K562 (cell line): ENCODE measurements at regions of chr4 and their contacts with region 1.

Region 1: GRCh38 chr4:154807042-154807630 is 26.1 kb downstream of the RBM46 start:
- DNase-seq: peak; percentile 8 to 20 (median 16)
- ATAC-seq: peak; percentile 70; the same call in 2 of the 3 replicates
- H3K4me3 ChIP-seq: no peak overlapping the region
- H3K27ac ChIP-seq: no peak overlapping the region
- H3K4me1 ChIP-seq: no peaks in the 10 kb centered on the region
- H3K27me3 ChIP-seq: no peaks in the 10 kb centered on the region
- CTCF ChIP-seq: peak; percentile 50 to 99 (median 98); a peak in 5 of 6 replicates
- EP300 ChIP-seq: no peak
- POLR2A ChIP-seq: no peak
- RAD21 ChIP-seq: peak; percentile 75 to 88

Region 2: DNA sequence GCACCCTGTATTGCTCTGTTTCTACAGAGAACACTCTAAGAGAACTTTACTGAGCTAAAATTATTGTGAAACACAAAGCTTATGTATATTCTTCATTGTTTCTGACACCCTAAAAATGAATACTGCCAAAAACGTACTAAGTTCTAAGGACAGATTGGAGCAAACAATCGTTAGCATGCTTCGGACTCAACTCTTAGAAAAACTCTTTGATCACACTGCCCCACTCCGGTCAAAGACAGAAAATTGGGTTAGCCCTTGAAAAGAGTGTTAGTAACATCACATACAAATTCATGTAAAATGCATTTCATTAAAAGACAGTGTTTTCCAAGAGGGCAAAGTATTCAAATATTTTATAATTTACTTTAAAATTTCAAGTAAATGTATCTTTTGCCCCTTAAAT is 492.9 kb before region 1 on chr4:
- CTCF ChIA-PET with region 1: no interaction called
- POLR2A ChIA-PET with region 1: no interaction called
- in situ Hi-C with region 1: no loop called
- intact Hi-C with region 1: no loop called
- DNase-seq: peak in 1 of 4 experiments; percentile 5
- ATAC-seq: no peak
- H3K4me3 ChIP-seq: no peak overlapping the region
- H3K27ac ChIP-seq: no peak overlapping the region
- H3K4me1 ChIP-seq: no peaks in the 10 kb centered on the region
- H3K27me3 ChIP-seq: no peaks in the 10 kb centered on the region
- CTCF ChIP-seq: peak in 1 of 3 experiments; percentile 34; a peak in 2 of 6 replicates
- EP300 ChIP-seq: no peak
- POLR2A ChIP-seq: no peak
- RAD21 ChIP-seq: peak; percentile 34 to 42

Region 3: DNA sequence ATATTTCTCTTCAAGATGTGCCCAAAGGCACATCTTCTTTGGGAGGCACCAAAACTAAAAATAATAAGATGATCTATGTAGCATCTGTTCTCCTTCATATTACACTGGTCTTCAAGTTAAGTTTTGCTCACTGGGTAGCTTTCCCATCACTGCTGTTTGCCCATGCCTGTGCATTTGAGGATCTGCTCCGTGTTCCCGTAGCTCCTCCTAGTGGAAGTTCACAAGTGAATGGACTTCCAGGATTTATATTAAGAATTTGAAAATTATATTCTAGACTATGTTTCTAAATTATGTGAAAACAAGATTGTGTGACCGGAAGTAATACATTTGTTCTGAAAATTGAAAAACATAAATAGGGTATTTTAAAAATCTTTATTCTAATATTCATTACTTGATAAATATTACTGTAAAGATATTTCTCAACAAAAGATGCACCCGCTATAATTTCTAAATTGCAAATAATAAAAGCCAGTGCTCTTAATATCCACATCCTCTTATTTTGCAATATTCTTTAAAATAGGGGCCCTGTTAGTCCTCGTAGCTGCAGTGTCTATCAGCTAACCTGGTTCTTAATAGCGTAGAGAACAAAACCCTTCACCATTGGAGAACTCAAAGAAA is 121.6 kb after region 1 on chr4:
- CTCF ChIA-PET with region 1: interaction called, 5 read pairs
- POLR2A ChIA-PET with region 1: no interaction called
- in situ Hi-C with region 1: no loop called
- intact Hi-C with region 1: loop called (anchors 1 kb)
- DNase-seq: peak in 1 of 4 experiments; percentile 6
- ATAC-seq: no peak
- H3K4me3 ChIP-seq: no peak overlapping the region
- H3K27ac ChIP-seq: no peak overlapping the region
- H3K4me1 ChIP-seq: no peaks in the 10 kb centered on the region
- H3K27me3 ChIP-seq: no peaks in the 10 kb centered on the region
- CTCF ChIP-seq: peak in 2 of 3 experiments; percentile 10 to 40; a peak in 3 of 6 replicates
- EP300 ChIP-seq: no peak
- POLR2A ChIP-seq: no peak
- RAD21 ChIP-seq: 0 out of 4 replicates have a peak, but pooled peaks of 1 of the 2 experiments have one; percentile 33

Region 4: GRCh38 chr4:155353923-155354540 is 546.9 kb after region 1 on chr4:
- CTCF ChIA-PET with region 1: interaction called, 3 read pairs
- POLR2A ChIA-PET with region 1: no interaction called
- in situ Hi-C with region 1: loop called (anchors 25 kb)
- intact Hi-C with region 1: loop called (anchors 5 kb)
- DNase-seq: peak; percentile 8 to 43 (median 19)
- ATAC-seq: peak; percentile 70
- H3K4me3 ChIP-seq: no peak overlapping the region
- H3K27ac ChIP-seq: no peak overlapping the region
- H3K4me1 ChIP-seq: no peaks in the 10 kb centered on the region
- H3K27me3 ChIP-seq: no peaks in the 10 kb centered on the region
- CTCF ChIP-seq: peak; percentile 30 to 45 (median 37); a peak in 5 of 6 replicates
- EP300 ChIP-seq: no peak
- POLR2A ChIP-seq: no peak
- RAD21 ChIP-seq: peak; percentile 41 to 49

Region 5: DNA sequence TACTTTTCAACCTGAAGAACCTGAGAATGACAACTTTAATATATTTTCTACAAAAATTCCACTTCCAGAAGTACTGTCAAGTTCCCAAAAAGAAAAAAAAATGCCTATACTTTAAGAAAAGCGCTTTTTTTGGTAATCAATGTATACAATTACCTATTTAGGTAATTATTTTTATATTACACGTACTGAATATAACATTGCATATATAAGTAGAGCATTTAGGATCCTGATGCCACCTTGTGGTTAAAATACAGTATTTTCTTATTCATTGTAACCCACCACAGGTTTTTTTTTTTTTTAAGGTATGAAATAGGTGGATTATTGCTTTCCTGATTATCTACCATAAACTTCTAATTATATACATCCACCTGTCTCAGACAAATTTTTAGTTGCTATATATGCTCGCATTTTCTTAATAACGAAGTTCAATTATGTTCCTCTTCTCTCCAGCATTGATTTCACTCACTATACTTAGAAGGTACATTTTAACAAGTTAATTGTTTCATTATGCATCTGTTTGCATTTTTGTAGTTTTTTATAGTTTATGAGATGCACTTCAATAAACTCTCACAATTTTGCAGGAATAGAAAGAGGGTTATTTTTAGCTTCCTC is 564.4 kb after region 1 on chr4:
- CTCF ChIA-PET with region 1: interaction called, 24 read pairs
- POLR2A ChIA-PET with region 1: no interaction called
- in situ Hi-C with region 1: loop called (anchors 25 kb)
- intact Hi-C with region 1: loop called (anchors 1 kb)
- DNase-seq: peak in 1 of 4 experiments; percentile 6
- ATAC-seq: peak; percentile 65
- H3K4me3 ChIP-seq: no peak overlapping the region
- H3K27ac ChIP-seq: no peak overlapping the region
- H3K4me1 ChIP-seq: peaks cover 0 to 3% of the 10 kb centered on the region in 2 experiments; a peak in 2 of 5 replicates
- H3K27me3 ChIP-seq: no peaks in the 10 kb centered on the region
- CTCF ChIP-seq: peak in 2 of 3 experiments; percentile 19 to 47; a peak in 3 of 6 replicates
- EP300 ChIP-seq: no peak
- POLR2A ChIP-seq: no peak
- RAD21 ChIP-seq: peak; percentile 34 to 38

Region 6: DNA sequence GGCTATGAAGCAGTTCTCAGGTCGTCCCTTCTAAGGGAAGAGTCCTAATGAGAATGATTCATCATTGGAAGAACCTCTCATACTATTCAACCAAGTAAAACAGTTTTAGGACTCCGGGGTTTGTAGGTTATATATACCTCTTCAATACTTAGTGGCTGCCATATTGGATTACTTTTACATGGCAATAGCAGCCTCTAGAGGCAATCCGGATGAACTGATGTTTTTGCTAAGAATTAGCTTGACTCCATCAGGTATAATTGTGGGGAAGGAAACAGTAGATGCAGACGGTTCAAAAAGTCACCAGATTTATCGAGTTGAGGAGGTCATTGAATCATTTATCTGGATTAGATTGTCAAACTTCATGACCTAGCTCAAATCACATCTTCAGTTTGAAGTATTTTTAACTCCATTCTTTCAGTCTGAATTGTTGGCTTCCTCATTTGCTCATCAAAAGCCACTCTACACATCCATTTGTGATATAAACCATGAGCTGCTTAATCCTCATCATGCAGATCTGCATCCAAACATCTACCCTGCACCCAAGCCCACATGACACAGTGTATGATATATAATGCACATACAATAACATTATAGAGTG is 980.1 kb after region 1 on chr4:
- CTCF ChIA-PET with region 1: no interaction called
- POLR2A ChIA-PET with region 1: no interaction called
- in situ Hi-C with region 1: no loop called
- intact Hi-C with region 1: loop called (anchors 5 kb)
- DNase-seq: peak in 1 of 4 experiments; percentile 5
- ATAC-seq: no peak
- H3K4me3 ChIP-seq: no peak overlapping the region
- H3K27ac ChIP-seq: no peak overlapping the region
- H3K4me1 ChIP-seq: no peaks in the 10 kb centered on the region
- H3K27me3 ChIP-seq: no peaks in the 10 kb centered on the region
- CTCF ChIP-seq: peak in 2 of 3 experiments; percentile 22 to 34; a peak in 1 of 6 replicates
- EP300 ChIP-seq: no peak
- POLR2A ChIP-seq: no peak
- RAD21 ChIP-seq: peak; percentile 33 to 52

Region 7: GRCh38 chr4:155953151-155954114 is 1146.3 kb after region 1 on chr4 and contains the start of gene CTSO:
- CTCF ChIA-PET with region 1: no interaction called
- POLR2A ChIA-PET with region 1: no interaction called
- in situ Hi-C with region 1: no loop called
- intact Hi-C with region 1: loop called (anchors 5 kb)
- DNase-seq: peak; percentile 9 to 40 (median 22)
- ATAC-seq: peak; percentile 98
- H3K4me3 ChIP-seq: peak within 1 kb of the TSS; percentile 51
- H3K27ac ChIP-seq: no peak within 1 kb of the TSS
- H3K4me1 ChIP-seq: peaks cover 0 to 7% of the 10 kb centered on the region in 2 experiments; a peak in 2 of 5 replicates
- H3K27me3 ChIP-seq: no peaks in the 10 kb centered on the region
- CTCF ChIP-seq: peak; percentile 35 to 53 (median 38); a peak in 4 of 6 replicates
- EP300 ChIP-seq: no peak
- POLR2A ChIP-seq: no peak
- RAD21 ChIP-seq: peak; percentile 32 to 38; a peak in 3 of 4 replicates
- polyA plus RNA-seq, gene CTSO: not detected